HepG2 (cell line): ENCODE measurements at regions of chr4 and their contacts with region 1.

Region 1: GRCh38 chr4:186260504-186261448 is 5.2 kb upstream of the F11 start:
- DNase-seq: peak; percentile 77
- ATAC-seq: peak; percentile 89
- H3K4me3 ChIP-seq: peak overlapping the region in 1 of 3 experiments; percentile 42; a peak in 2 of 6 replicates
- H3K27ac ChIP-seq: peak overlapping the region; percentile 93
- H3K4me1 ChIP-seq: peaks cover 64% of the 10 kb centered on the region
- H3K27me3 ChIP-seq: no peaks in the 10 kb centered on the region; a peak in 1 of 5 replicates
- CTCF ChIP-seq: peak; percentile 39
- EP300 ChIP-seq: peak in 1 of 2 experiments; percentile 81; a peak in 2 of 4 replicates
- POLR2A ChIP-seq: peak; percentile 38 to 47
- RAD21 ChIP-seq: peak; percentile 49

Region 2: DNA sequence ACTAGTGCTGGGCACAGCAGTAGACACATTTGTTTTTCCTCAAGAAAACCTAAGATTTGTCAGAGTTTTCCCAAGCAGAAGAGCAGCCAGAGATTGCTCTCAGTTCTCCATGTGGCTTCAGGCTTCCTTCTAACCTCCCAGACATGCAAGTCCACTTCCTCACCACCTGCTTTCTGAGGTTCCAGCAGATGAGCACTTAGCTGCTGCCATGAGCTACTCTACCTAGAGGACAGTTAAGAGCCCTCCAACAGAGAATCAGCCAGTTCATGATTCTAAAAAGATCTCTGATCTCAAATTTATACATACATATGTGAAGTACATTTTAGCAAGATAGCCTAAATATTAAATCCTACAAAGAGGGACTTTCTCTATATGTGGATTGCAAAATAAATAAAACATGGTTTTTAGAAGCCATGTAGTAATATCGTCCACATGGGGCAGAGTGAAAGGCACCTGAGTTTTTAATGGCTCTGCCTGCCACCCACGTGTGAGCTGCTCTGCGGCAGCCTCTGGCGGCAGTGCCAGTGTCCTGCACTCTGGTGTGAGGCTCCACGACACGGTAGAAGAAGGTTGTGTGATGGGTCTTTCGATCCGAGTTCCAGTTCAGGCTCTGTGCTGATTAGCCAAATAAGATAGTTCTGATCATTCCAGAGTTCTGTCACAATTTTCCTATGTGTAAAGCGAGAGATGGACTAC is 59.1 kb before region 1 on chr4:
- CTCF ChIA-PET with region 1: no interaction called
- POLR2A ChIA-PET with region 1: interaction called, 11 read pairs
- in situ Hi-C with region 1: no loop called
- intact Hi-C with region 1: no loop called
- DNase-seq: peak; percentile 59
- ATAC-seq: peak; percentile 100
- H3K4me3 ChIP-seq: no peak overlapping the region
- H3K27ac ChIP-seq: no peak overlapping the region
- H3K4me1 ChIP-seq: 0 out of 2 replicates have a peak, but pooled peaks cover 5% of the 10 kb centered on the region
- H3K27me3 ChIP-seq: no peaks in the 10 kb centered on the region
- CTCF ChIP-seq: peak; percentile 82
- EP300 ChIP-seq: no peak
- POLR2A ChIP-seq: no peak
- RAD21 ChIP-seq: peak; percentile 81

Region 3: GRCh38 chr4:186249785-186250754 is 10.7 kb before region 1 on chr4:
- CTCF ChIA-PET with region 1: no interaction called
- POLR2A ChIA-PET with region 1: interaction called, 22 read pairs
- in situ Hi-C with region 1: no loop called
- intact Hi-C with region 1: no loop called
- DNase-seq: no peak
- ATAC-seq: no peak
- H3K4me3 ChIP-seq: no peak overlapping the region
- H3K27ac ChIP-seq: no peak overlapping the region
- H3K4me1 ChIP-seq: peaks cover 18% of the 10 kb centered on the region
- H3K27me3 ChIP-seq: no peaks in the 10 kb centered on the region
- CTCF ChIP-seq: no peak
- EP300 ChIP-seq: no peak
- POLR2A ChIP-seq: no peak
- RAD21 ChIP-seq: no peak

Region 4: DNA sequence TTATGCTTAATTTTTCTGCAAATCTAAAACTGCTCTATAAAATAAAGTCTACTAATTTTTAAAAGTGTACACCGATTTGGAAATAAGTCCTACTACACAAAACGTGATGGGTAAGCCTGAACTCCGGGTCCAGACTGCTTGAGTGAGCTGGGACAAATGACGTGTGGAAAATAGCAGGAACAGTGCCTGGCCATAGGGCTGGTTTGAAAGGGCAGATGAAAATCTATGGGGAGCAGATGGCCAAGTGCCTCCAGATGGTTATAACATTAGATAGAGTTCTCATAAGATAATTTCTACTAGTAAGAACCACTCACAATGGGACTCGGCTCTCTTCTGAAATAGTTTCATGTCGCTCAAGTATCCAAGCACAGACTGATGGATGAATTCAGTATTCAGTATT is 57.7 kb after region 1 on chr4:
- CTCF ChIA-PET with region 1: no interaction called
- POLR2A ChIA-PET with region 1: no interaction called
- in situ Hi-C with region 1: no loop called
- intact Hi-C with region 1: no loop called
- DNase-seq: no peak
- ATAC-seq: no peak
- H3K4me3 ChIP-seq: no peak overlapping the region
- H3K27ac ChIP-seq: no peak overlapping the region
- H3K4me1 ChIP-seq: no peaks in the 10 kb centered on the region
- H3K27me3 ChIP-seq: peaks cover 0 to 22% of the 10 kb centered on the region in 2 experiments; a peak in 2 of 5 replicates
- CTCF ChIP-seq: no peak
- EP300 ChIP-seq: no peak
- POLR2A ChIP-seq: no peak
- RAD21 ChIP-seq: no peak